ENCODE measurements at regions of chr11 and their contacts with region 1.

Region 1: GRCh38 chr11:64734811-64735724 is 8.9 kb downstream of the RASGRP2 start:
- DNase-seq: no peak
- ATAC-seq: peak in 1 of 2 experiments; percentile 31; a peak in 3 of 6 replicates
- H3K4me3 ChIP-seq: no peak overlapping the region
- H3K27ac ChIP-seq: no peak overlapping the region
- H3K4me1 ChIP-seq: no peaks in the 10 kb centered on the region
- CTCF ChIP-seq: no peak
- EP300 ChIP-seq: no peak
- POLR2A ChIP-seq: no peak
- RAD21 ChIP-seq: no peak

Region 2: DNA sequence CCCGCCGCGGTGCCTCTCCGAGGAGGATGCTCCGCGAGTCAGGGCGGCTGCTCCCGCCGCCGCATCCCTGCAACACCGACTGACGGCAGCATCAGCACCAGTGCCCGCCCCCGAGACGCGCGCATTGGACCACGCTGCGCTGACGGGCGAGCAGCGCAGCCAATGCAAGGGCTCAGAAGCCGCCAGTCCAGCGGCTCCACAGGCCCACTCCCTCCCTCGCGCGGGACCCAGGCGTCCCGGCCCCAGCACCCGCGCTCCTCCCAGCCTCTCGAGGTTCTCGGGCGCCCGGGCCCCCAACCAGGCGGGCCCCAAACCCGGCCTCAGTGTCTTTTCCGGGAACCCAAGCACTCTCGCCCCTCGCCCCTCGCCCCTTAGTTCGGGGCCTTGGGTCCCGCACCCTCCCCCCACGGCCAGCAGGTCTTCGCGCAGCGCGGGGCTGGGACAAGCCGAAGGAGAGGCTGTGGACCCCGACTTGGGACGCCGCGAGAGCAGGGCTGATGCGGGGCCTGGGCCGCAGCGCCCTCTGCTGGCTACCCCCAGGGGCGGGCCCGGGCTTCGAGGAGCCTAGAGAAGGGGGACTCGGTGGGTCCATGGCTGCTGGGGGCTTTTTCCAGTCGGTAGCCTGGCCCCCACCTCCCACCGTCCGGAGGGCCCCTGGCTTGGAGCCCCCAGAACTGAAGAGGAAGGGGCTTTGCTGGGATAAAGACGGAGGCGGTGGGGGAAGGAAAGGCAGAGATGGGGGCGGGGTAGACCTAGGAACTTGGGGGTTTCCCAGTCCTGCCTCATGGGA is 11.8 kb before region 1 on chr11 and contains the start of gene NRXN2:
- CTCF ChIA-PET with region 1: interaction called, 97 read pairs
- POLR2A ChIA-PET with region 1: no interaction called
- DNase-seq: peak; percentile 88 to 98
- ATAC-seq: peak; percentile 90 to 98
- H3K4me3 ChIP-seq: peak within 1 kb of the TSS; percentile 94
- H3K27ac ChIP-seq: peak within 1 kb of the TSS; percentile 88 to 95
- H3K4me1 ChIP-seq: peaks cover 18% of the 10 kb centered on the region; the same call in 2 of the 3 replicates
- CTCF ChIP-seq: peak; percentile 96
- EP300 ChIP-seq: no peak
- POLR2A ChIP-seq: no peak
- RAD21 ChIP-seq: peak; percentile 54 to 75; a peak in 4 of 5 replicates
- polyA plus RNA-seq, gene NRXN2: not detected in 2 replicates

Region 3: GRCh38 chr11:65588199-65589054 is 853.4 kb after region 1 on chr11:
- CTCF ChIA-PET with region 1: no interaction called
- POLR2A ChIA-PET with region 1: no interaction called
- DNase-seq: peak; percentile 77 to 86
- ATAC-seq: peak; percentile 76 to 90
- H3K4me3 ChIP-seq: no peak overlapping the region
- H3K27ac ChIP-seq: peak overlapping the region in 1 of 2 experiments; percentile 69; a peak in 3 of 6 replicates
- H3K4me1 ChIP-seq: peaks cover 15% of the 10 kb centered on the region
- CTCF ChIP-seq: peak; percentile 50
- EP300 ChIP-seq: no peak
- POLR2A ChIP-seq: no peak
- RAD21 ChIP-seq: peak; percentile 50 to 68